ENCODE measurements at regions of chr20 and their contacts with region 1.

Region 1: GRCh38 chr20:10553326-10553984 is 118.3 kb downstream of the SLX4IP start:
- DNase-seq: peak in 5 of 6 donors; percentile 50 to 77 (median 58)
- ATAC-seq: peak in 3 of 4 donors; percentile 52 to 71 (median 64)
- H3K4me3 ChIP-seq: no peak overlapping the region
- H3K27ac ChIP-seq: no peak overlapping the region
- H3K4me1 ChIP-seq: peaks cover 12 to 40% (median 27%) of the 10 kb centered on the region in 3 donors
- H3K27me3 ChIP-seq: no peaks in the 10 kb centered on the region
- CTCF ChIP-seq: peak; percentile 35 to 72 (median 62)

Region 2: GRCh38 chr20:10798811-10799210 is 245.4 kb after region 1 on chr20:
- intact Hi-C with region 1: no loop called
- DNase-seq: peak in 1 of 6 donors; percentile 43
- ATAC-seq: peak in 1 of 4 donors; percentile 3
- H3K4me3 ChIP-seq: no peak overlapping the region
- H3K27ac ChIP-seq: no peak overlapping the region
- H3K4me1 ChIP-seq: peaks cover 15 to 29% (median 26%) of the 10 kb centered on the region in 3 donors
- H3K27me3 ChIP-seq: no peaks in the 10 kb centered on the region
- CTCF ChIP-seq: no peak

Region 3: DNA sequence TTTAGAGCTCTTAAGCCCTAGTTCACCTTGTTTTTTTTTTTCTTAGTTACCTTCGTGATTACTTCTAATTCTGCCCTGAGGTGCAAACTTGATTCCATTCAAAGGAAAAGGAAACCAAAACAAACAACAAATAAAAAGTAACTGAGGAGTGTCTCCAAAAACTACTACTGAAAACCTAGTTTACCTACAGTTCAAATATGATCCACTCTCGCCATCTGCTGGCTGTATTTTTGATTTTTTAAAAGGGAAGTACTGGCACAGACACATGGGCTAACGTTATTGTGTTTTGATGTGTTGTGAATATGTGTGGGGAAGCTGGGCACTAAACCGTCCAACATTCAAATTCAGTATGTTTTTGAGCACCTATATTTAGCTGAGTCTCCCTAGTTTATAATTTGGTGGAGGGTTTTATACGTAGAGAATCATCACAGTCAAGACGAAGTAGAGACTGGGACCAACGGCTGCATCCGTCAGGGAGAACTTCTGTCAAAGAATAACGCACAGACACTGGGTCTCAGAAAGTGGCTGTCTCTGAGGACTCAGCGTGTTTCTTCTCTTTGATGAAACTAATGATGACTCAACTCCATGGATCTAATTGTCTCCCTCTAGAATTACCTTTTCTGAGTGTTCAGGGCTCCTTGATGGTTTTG is 990.7 kb after region 1 on chr20:
- intact Hi-C with region 1: loop called in 1 of 3 experiments (anchors 10 kb)
- DNase-seq: peak in 2 of 6 donors; percentile 16 to 37
- ATAC-seq: peak; percentile 76 to 92 (median 88)
- H3K4me3 ChIP-seq: no peak overlapping the region
- H3K27ac ChIP-seq: peak overlapping the region in 2 of 4 donors; percentile 1 to 34
- H3K4me1 ChIP-seq: no peaks in the 10 kb centered on the region
- H3K27me3 ChIP-seq: no peaks in the 10 kb centered on the region
- CTCF ChIP-seq: peak in 2 of 4 donors; percentile 22 to 31